Gastrocnemius medialis (tissue), 4 donors: ENCODE measurements at regions of chr1 and their contacts with region 1.

Region 1: DNA sequence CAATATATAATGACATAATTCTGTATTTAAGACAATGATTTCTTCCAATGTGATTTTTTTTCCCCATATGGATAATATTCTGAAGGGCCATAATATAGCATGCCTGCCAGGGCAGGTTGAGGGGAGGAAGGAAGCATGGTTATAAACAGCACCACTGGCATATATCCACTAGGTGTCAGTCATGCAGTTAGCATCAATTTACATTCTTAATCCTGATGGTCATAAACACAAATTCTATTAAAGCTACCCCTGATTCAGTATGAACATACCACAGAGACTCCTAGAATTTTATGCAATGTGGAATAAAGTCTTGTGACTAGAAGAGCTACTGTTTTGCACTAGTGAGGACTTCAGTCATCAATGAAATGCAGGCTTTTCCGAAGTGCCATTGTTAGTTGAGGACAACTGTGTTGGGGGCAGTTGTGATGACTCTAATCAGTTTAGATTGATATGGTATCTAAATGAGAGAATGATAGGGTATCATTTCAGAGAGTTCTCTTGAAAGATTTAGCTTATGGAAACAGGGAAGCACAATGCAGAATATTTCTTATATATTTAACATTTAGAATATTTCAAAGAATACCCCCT is 342.7 kb upstream of the NR5A2 start:
- DNase-seq: no peak
- ATAC-seq: peak in 1 of 2 donors; percentile 50
- H3K4me3 ChIP-seq: no peak overlapping the region
- H3K27ac ChIP-seq: no peak overlapping the region
- H3K4me1 ChIP-seq: no peaks in the 10 kb centered on the region
- H3K27me3 ChIP-seq: no peaks in the 10 kb centered on the region
- CTCF ChIP-seq: peak; percentile 27 to 67 (median 59)
- POLR2A ChIP-seq: no peak

Region 2: GRCh38 chr1:200279810-200280411 is 595.1 kb after region 1 on chr1:
- in situ Hi-C with region 1: loop called in 1 of 4 experiments (anchors 25 kb)
- intact Hi-C with region 1: no loop called
- DNase-seq: no peak
- ATAC-seq: no peak
- H3K4me3 ChIP-seq: no peak overlapping the region
- H3K27ac ChIP-seq: no peak overlapping the region
- H3K4me1 ChIP-seq: no peaks in the 10 kb centered on the region
- H3K27me3 ChIP-seq: no peaks in the 10 kb centered on the region
- CTCF ChIP-seq: peak in 4 of 5 experiments; percentile 22 to 58 (median 40)
- POLR2A ChIP-seq: no peak

Region 3: GRCh38 chr1:200302192-200302920 is 617.6 kb after region 1 on chr1:
- in situ Hi-C with region 1: loop called in 3 of 4 experiments (anchors 25 kb)
- intact Hi-C with region 1: loop called (anchors 2 kb)
- DNase-seq: no peak
- ATAC-seq: no peak
- H3K4me3 ChIP-seq: peak overlapping the region; percentile 46 to 62 (median 56)
- H3K27ac ChIP-seq: no peak overlapping the region
- H3K4me1 ChIP-seq: peaks cover 0 to 4% of the 10 kb centered on the region in 2 donors
- H3K27me3 ChIP-seq: peaks cover 5 to 17% (median 15%) of the 10 kb centered on the region in 3 donors
- CTCF ChIP-seq: no peak
- POLR2A ChIP-seq: no peak

Region 4: GRCh38 chr1:200488375-200489165 is 803.8 kb after region 1 on chr1:
- in situ Hi-C with region 1: loop called in 3 of 4 experiments (anchors 10 kb)
- intact Hi-C with region 1: loop called (anchors 5 kb)
- DNase-seq: no peak
- ATAC-seq: peak; percentile 60 to 76
- H3K4me3 ChIP-seq: no peak overlapping the region
- H3K27ac ChIP-seq: no peak overlapping the region
- H3K4me1 ChIP-seq: peaks cover 0 to 6% of the 10 kb centered on the region in 2 donors
- H3K27me3 ChIP-seq: no peaks in the 10 kb centered on the region
- CTCF ChIP-seq: peak; percentile 55 to 83 (median 77)
- POLR2A ChIP-seq: no peak

Region 5: GRCh38 chr1:200510228-200510623 is 825.4 kb after region 1 on chr1:
- in situ Hi-C with region 1: loop called in 1 of 4 experiments (anchors 10 kb)
- intact Hi-C with region 1: loop called (anchors 10 kb)
- DNase-seq: peak; percentile 29 to 32
- ATAC-seq: peak; percentile 65 to 75
- H3K4me3 ChIP-seq: no peak overlapping the region
- H3K27ac ChIP-seq: no peak overlapping the region
- H3K4me1 ChIP-seq: no peaks in the 10 kb centered on the region
- H3K27me3 ChIP-seq: no peaks in the 10 kb centered on the region
- CTCF ChIP-seq: peak; percentile 51 to 93 (median 79)
- POLR2A ChIP-seq: no peak

Region 6: GRCh38 chr1:200802865-200803512 is 1118.2 kb after region 1 on chr1:
- in situ Hi-C with region 1: no loop called
- intact Hi-C with region 1: loop called (anchors 5 kb)
- DNase-seq: peak; percentile 29 to 59
- ATAC-seq: peak; percentile 72 to 88
- H3K4me3 ChIP-seq: no peak overlapping the region
- H3K27ac ChIP-seq: no peak overlapping the region
- H3K4me1 ChIP-seq: peaks cover 0 to 4% of the 10 kb centered on the region in 2 donors
- H3K27me3 ChIP-seq: no peaks in the 10 kb centered on the region
- CTCF ChIP-seq: peak; percentile 84 to 94 (median 88)
- POLR2A ChIP-seq: no peak